Mammary epithelial cell (primary cell): ENCODE measurements at regions of chr16 and their contacts with region 1.

Region 1: GRCh38 chr16:58638148-58639036 is 8.8 kb upstream of the CNOT1 start:
- DNase-seq: peak; percentile 81
- H3K4me3 ChIP-seq: no peak overlapping the region
- H3K27ac ChIP-seq: peak overlapping the region; percentile 15
- H3K4me1 ChIP-seq: peaks cover 13% of the 10 kb centered on the region
- H3K27me3 ChIP-seq: no peaks in the 10 kb centered on the region
- CTCF ChIP-seq: peak; percentile 38 to 67

Region 2: DNA sequence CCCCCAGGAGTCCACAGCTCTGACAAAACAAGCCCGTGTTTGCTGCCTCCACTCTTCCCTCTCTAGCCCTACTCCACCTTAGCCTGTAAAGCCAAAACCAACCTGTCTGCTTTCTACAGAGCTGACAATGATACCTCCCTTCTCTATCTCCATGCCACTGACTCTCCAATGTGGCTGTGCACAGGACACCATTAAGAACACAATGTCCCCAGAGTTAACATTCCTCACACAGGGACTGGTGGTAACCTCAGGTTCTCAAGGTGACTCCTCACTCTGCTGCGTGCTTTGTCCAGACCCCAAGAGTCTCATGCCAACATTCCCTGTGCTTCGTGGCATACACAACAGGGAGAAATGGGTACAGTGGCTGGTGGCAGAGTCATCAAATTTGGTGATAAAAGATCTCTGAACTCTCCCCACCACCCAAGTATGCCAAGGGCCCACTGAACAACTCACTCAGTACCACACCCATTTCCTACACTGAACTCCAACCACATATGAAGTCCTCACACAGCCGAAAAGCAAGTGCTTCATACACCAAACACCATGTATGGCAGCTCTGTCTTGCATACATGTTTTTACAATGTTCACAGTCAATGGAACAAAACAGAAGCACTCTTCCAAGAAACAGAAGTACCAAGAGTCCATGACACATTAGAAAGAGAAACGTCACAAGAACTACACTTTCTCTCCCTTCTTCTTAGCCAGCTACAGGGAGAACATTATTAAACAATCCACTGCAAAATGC is 461.6 kb before region 1 on chr16:
- CTCF ChIA-PET with region 1: no interaction called
- dilution Hi-C with region 1: no loop called
- in situ Hi-C with region 1: no loop called
- intact Hi-C with region 1: no loop called
- DNase-seq: no peak
- H3K4me3 ChIP-seq: no peak overlapping the region
- H3K27ac ChIP-seq: no peak overlapping the region
- H3K4me1 ChIP-seq: no peaks in the 10 kb centered on the region
- H3K27me3 ChIP-seq: no peaks in the 10 kb centered on the region
- CTCF ChIP-seq: no peak

Region 3: GRCh38 chr16:58515125-58515870 is 123.1 kb before region 1 on chr16 and contains the start of gene SETD6:
- CTCF ChIA-PET with region 1: no interaction called
- dilution Hi-C with region 1: no loop called
- in situ Hi-C with region 1: no loop called
- intact Hi-C with region 1: loop called (anchors 1 kb)
- DNase-seq: peak; percentile 77
- H3K4me3 ChIP-seq: peak within 1 kb of the TSS; percentile 49 to 84 (median 65)
- H3K27ac ChIP-seq: peak within 1 kb of the TSS; percentile 2
- H3K4me1 ChIP-seq: peaks cover 17% of the 10 kb centered on the region
- H3K27me3 ChIP-seq: no peaks in the 10 kb centered on the region
- CTCF ChIP-seq: peak in 1 of 2 donors; percentile 35
- total RNA-seq, gene SETD6: 12.5 to 14.4 TPM

Region 4: GRCh38 chr16:58589326-58589905 is 49.0 kb before region 1 on chr16:
- CTCF ChIA-PET with region 1: no interaction called
- dilution Hi-C with region 1: no loop called
- in situ Hi-C with region 1: no loop called
- intact Hi-C with region 1: no loop called
- DNase-seq: no peak
- H3K4me3 ChIP-seq: no peak overlapping the region
- H3K27ac ChIP-seq: no peak overlapping the region
- H3K4me1 ChIP-seq: no peaks in the 10 kb centered on the region
- H3K27me3 ChIP-seq: no peaks in the 10 kb centered on the region
- CTCF ChIP-seq: no peak